ENCODE measurements at regions of chr3 and their contacts with region 1.

Region 1: DNA sequence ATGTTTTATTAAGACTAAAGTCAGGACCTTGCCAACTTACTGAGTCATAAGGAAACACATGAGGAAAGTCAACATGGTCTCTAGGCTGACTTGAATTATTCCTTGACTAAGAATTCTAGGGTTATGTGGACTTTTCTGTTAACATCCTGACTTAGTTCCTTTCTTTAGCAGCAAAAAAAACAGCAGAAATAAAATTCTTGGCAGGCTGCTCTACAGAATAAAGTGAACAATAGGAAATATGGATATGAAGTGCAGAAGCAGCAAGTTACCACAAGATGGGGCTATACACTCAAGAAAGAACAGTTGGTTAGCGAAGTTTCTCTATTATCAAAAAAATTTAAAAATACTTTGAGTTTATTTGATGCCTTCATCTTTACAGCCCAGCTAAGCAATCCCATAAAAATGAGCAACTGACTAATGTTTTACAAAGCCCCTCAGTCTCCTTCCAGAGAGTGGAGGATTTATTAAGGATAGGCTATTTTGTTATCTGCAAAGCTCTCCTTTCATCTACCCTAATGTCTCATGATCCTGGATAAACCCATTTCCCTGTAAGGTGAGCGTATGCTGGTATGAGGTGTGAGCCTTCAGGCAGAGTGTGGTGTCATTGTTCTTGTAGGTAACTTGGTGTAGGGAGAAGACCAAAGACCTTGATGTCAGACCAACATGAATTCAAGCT is 23.1 kb upstream of the MCCC1 start:
- DNase-seq: no peak
- ATAC-seq: peak; percentile 61
- H3K4me3 Mint-ChIP-seq: no peak overlapping the region
- H3K27ac Mint-ChIP-seq: no peak overlapping the region
- H3K4me1 Mint-ChIP-seq: peaks cover 2% of the 10 kb centered on the region
- H3K27me3 Mint-ChIP-seq: peaks cover 32% of the 10 kb centered on the region
- CTCF ChIP-seq: peak; percentile 76

Region 2: DNA sequence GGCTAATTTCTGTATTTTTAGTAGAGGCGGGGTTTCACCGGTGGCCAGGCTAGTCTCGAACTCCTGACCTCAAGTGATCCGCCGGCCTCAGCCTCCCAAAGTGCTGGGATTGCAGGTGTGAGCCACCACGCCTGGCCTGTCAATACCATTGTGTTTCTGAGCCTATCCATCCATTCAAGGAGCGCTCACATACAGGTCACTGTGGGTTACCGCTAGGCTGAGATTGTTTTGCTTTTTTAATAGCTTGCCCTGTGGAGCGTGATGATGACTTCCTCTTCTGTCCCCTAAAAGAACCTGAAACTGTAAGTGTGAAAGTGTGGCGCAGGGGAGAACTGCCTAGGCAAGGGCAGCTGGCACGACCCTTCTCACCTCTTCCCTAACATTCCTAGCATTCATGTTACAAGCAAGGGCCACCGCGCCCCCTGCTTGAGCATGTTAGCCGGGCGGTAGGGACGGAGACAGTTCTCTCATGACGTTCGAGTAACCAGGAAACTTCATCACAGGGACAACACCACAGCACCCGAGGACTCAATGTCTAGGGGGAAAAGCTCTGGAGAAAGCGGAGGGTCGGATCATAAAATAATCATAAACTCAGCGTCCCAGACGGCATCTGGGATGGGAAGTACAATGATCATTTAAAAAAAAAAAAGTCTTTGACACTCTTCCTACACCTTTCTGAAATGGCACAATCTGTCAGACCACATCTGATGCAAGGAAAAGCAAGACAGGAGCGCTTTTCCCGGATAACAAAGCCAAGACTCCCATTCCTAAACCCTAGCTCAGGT is 39.3 kb after region 1 on chr3:
- CTCF ChIA-PET with region 1: interaction called, 3 read pairs
- POLR2A ChIA-PET with region 1: no interaction called
- intact Hi-C with region 1: loop called (anchors 5 kb)
- DNase-seq: peak; percentile 36
- ATAC-seq: peak; percentile 78
- H3K4me3 Mint-ChIP-seq: peak overlapping the region; percentile 81
- H3K27ac Mint-ChIP-seq: peak overlapping the region; percentile 77
- H3K4me1 Mint-ChIP-seq: peaks cover 34% of the 10 kb centered on the region
- H3K27me3 Mint-ChIP-seq: peaks cover 48% of the 10 kb centered on the region
- CTCF ChIP-seq: no peak

Region 3: DNA sequence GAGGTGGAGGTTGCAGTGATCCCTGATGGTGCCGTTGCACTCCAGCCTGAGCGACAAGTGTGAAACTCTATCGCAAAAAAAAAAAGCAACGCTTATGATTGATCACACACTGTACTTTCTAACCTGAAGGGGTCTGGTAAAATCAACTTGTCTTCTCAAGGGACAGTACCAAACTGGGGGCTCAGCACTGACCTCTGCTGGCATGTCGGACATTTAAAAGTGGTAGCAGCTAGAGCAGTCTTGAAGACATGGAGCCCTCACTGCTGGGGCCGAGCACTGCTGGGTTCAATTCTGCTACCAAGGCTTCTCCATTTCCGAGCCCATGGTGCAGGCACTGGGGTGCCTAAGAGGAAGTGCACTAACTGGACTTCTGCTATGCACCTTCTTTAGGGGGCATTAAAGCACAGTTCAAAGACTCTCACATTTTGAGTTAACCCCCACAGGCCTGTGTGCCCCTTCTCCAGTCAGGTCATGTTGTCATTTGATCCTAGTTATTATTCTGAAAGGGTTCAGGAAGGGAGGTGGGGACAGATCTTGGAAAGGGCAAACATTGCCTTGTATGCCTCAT is 66.6 kb after region 1 on chr3:
- CTCF ChIA-PET with region 1: interaction called, 28 read pairs
- POLR2A ChIA-PET with region 1: no interaction called
- intact Hi-C with region 1: loop called (anchors 1 kb)
- DNase-seq: no peak
- ATAC-seq: peak; percentile 56
- H3K4me3 Mint-ChIP-seq: no peak overlapping the region
- H3K27ac Mint-ChIP-seq: no peak overlapping the region
- H3K4me1 Mint-ChIP-seq: peaks cover 5% of the 10 kb centered on the region
- H3K27me3 Mint-ChIP-seq: peaks cover 33% of the 10 kb centered on the region
- CTCF ChIP-seq: no peak

Region 4: GRCh38 chr3:183285828-183286457 is 163.5 kb after region 1 on chr3:
- CTCF ChIA-PET with region 1: no interaction called
- POLR2A ChIA-PET with region 1: no interaction called
- intact Hi-C with region 1: loop called (anchors 5 kb)
- DNase-seq: peak; percentile 69
- ATAC-seq: peak; percentile 95
- H3K4me3 Mint-ChIP-seq: peak overlapping the region; percentile 78
- H3K27ac Mint-ChIP-seq: peak overlapping the region; percentile 94
- H3K4me1 Mint-ChIP-seq: peaks cover 43% of the 10 kb centered on the region
- H3K27me3 Mint-ChIP-seq: no peaks in the 10 kb centered on the region
- CTCF ChIP-seq: no peak

Region 5: GRCh38 chr3:183884427-183885296 is 762.3 kb after region 1 on chr3 and contains the start of gene PARL:
- CTCF ChIA-PET with region 1: no interaction called
- POLR2A ChIA-PET with region 1: no interaction called
- intact Hi-C with region 1: loop called (anchors 10 kb)
- DNase-seq: peak; percentile 94
- ATAC-seq: peak; percentile 99
- H3K4me3 Mint-ChIP-seq: peak within 1 kb of the TSS; percentile 98
- H3K27ac Mint-ChIP-seq: peak within 1 kb of the TSS; percentile 85
- H3K4me1 Mint-ChIP-seq: peaks cover 36% of the 10 kb centered on the region
- H3K27me3 Mint-ChIP-seq: peaks cover 2% of the 10 kb centered on the region
- CTCF ChIP-seq: no peak
- total RNA-seq, gene PARL: 57.6 and 57.8 TPM in 2 replicates

Measured in activated B cell treated with CpG ODN at 0.5 μM for 24 hours (primary cell).